Gastrocnemius medialis (tissue), 4 donors: ENCODE measurements at regions of chr1 and their contacts with region 1.

Region 1: GRCh38 chr1:201219481-201220359 is 29.1 kb downstream of the IGFN1 start:
- DNase-seq: no peak
- ATAC-seq: no peak
- H3K4me3 ChIP-seq: no peak overlapping the region
- H3K27ac ChIP-seq: no peak overlapping the region
- H3K4me1 ChIP-seq: peaks cover 0 to 6% of the 10 kb centered on the region in 2 donors
- H3K27me3 ChIP-seq: no peaks in the 10 kb centered on the region
- CTCF ChIP-seq: no peak
- POLR2A ChIP-seq: no peak

Region 2: GRCh38 chr1:200938955-200939354 is 280.8 kb before region 1 on chr1:
- in situ Hi-C with region 1: no loop called
- intact Hi-C with region 1: no loop called
- DNase-seq: no peak
- ATAC-seq: no peak
- H3K4me3 ChIP-seq: no peak overlapping the region
- H3K27ac ChIP-seq: no peak overlapping the region
- H3K4me1 ChIP-seq: no peaks in the 10 kb centered on the region
- H3K27me3 ChIP-seq: no peaks in the 10 kb centered on the region
- CTCF ChIP-seq: no peak
- POLR2A ChIP-seq: no peak

Region 3: GRCh38 chr1:201154389-201155165 is 65.1 kb before region 1 on chr1 and contains the start of gene TMEM9:
- in situ Hi-C with region 1: loop called in 1 of 4 experiments (anchors 10 kb)
- intact Hi-C with region 1: loop called (anchors 1 kb)
- DNase-seq: peak; percentile 93 to 96
- ATAC-seq: peak; percentile 94 to 96
- H3K4me3 ChIP-seq: peak within 1 kb of the TSS; percentile 70 to 84 (median 77)
- H3K27ac ChIP-seq: peak within 1 kb of the TSS; percentile 73 to 78 (median 76)
- H3K4me1 ChIP-seq: peaks cover 19 to 33% of the 10 kb centered on the region in 2 donors
- H3K27me3 ChIP-seq: no peaks in the 10 kb centered on the region
- CTCF ChIP-seq: no peak
- POLR2A ChIP-seq: no peak
- total RNA-seq, gene TMEM9: 11.9 to 38.8 (median 13.0) TPM